Activated CD4-positive, alpha-beta T cell treated with anti-CD3 and anti-CD28 coated beads for 36 hours (primary cell): ENCODE measurements at regions of chr5 and their contacts with region 1.

Region 1: GRCh38 chr5:17216176-17216973 is 1.1 kb upstream of the BASP1 start:
- DNase-seq: peak; percentile 81
- ATAC-seq: peak; percentile 53
- H3K4me3 Mint-ChIP-seq: peak overlapping the region; percentile 42
- H3K27ac Mint-ChIP-seq: no peak overlapping the region
- H3K4me1 Mint-ChIP-seq: peaks cover 14% of the 10 kb centered on the region
- H3K27me3 Mint-ChIP-seq: peaks cover 35% of the 10 kb centered on the region

Region 2: GRCh38 chr5:17228821-17229291 is 12.5 kb after region 1 on chr5:
- CTCF ChIA-PET with region 1: no interaction called
- POLR2A ChIA-PET with region 1: no interaction called
- intact Hi-C with region 1: no loop called
- DNase-seq: no peak
- ATAC-seq: peak; percentile 33
- H3K4me3 Mint-ChIP-seq: no peak overlapping the region
- H3K27ac Mint-ChIP-seq: no peak overlapping the region
- H3K4me1 Mint-ChIP-seq: peaks cover 3% of the 10 kb centered on the region
- H3K27me3 Mint-ChIP-seq: peaks cover 9% of the 10 kb centered on the region

Region 3: GRCh38 chr5:17355586-17356346 is 139.4 kb after region 1 on chr5:
- CTCF ChIA-PET with region 1: no interaction called
- POLR2A ChIA-PET with region 1: no interaction called
- intact Hi-C with region 1: no loop called
- DNase-seq: no peak
- ATAC-seq: no peak
- H3K4me3 Mint-ChIP-seq: no peak overlapping the region
- H3K27ac Mint-ChIP-seq: no peak overlapping the region
- H3K4me1 Mint-ChIP-seq: no peaks in the 10 kb centered on the region
- H3K27me3 Mint-ChIP-seq: no peaks in the 10 kb centered on the region

Region 4: DNA sequence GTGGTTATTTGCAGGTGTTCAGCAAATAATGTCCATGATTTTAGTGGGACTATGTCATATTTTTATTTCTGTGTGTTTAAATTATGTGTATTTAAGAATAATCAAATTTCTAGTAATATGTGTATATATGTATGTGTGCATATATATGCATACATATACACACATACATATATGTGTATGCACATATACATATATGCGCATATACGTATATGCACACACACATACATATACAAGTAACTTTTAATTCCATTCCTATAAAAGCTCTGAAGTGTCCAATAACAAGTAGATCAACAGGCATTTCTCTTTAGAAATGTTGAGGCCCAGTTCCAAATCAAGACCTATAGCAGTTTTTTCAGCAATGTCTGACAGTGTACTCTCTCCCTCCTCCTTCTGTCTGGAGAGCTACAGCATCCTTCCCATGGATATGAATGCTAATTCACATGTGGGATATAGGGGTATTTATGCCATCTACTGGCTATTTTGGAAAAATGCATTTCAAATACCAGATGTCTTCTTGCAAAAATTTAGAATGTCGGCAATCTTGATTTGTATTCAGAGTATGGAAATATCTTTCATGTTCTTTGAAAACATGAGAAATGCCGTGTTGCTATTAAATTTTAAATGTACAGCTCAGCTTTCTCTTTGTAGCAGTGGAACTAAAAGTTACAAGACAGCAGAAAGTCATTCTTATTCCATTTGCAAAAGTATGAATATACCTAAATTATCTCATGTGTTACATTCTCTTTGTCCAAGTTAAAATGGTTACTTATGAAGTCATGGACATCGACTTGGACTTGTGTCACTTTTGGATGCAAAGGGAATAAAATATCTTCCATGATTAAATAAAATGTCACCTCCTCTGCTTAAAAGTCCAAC is 1065.5 kb after region 1 on chr5:
- CTCF ChIA-PET with region 1: interaction called, 4 read pairs
- POLR2A ChIA-PET with region 1: no interaction called
- intact Hi-C with region 1: loop called in 1 of 2 experiments (anchors 1 kb)
- DNase-seq: no peak
- ATAC-seq: no peak
- H3K4me3 Mint-ChIP-seq: no peak overlapping the region
- H3K27ac Mint-ChIP-seq: no peak overlapping the region
- H3K4me1 Mint-ChIP-seq: no peaks in the 10 kb centered on the region
- H3K27me3 Mint-ChIP-seq: no peaks in the 10 kb centered on the region

Region 5: DNA sequence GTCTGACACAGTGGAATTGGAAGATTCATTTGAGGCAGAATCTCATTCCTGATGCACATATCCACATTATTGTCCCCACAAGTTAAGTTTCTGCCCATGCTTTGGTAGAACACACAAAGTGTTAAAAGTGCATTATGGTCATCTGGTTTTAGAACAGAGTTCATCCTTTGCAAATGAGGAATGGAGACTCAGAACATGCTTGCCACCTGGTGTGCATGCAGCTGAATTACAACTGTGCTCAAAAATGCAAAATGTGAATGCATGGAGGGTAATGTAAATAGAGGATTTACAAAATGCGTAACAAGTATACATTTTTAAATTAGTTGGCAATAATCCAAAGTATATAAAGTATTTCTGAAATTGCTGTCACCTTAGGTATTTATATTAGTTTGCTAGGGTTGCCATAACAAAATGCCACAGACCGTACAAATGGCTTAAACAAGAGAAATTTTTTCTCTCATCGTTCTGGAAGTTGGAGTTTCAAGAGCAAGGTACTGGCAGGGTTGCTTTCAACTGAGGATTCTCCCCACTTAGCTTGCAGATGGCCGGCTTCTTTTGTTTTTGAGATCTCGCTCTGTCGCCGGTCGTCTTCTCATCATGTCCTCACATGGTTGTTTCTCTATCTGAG is 1089.0 kb after region 1 on chr5:
- CTCF ChIA-PET with region 1: interaction called, 7 read pairs
- POLR2A ChIA-PET with region 1: no interaction called
- intact Hi-C with region 1: loop called in 1 of 2 experiments (anchors 1 kb)
- DNase-seq: peak; percentile 6
- ATAC-seq: no peak
- H3K4me3 Mint-ChIP-seq: no peak overlapping the region
- H3K27ac Mint-ChIP-seq: no peak overlapping the region
- H3K4me1 Mint-ChIP-seq: no peaks in the 10 kb centered on the region
- H3K27me3 Mint-ChIP-seq: no peaks in the 10 kb centered on the region

Region 6: DNA sequence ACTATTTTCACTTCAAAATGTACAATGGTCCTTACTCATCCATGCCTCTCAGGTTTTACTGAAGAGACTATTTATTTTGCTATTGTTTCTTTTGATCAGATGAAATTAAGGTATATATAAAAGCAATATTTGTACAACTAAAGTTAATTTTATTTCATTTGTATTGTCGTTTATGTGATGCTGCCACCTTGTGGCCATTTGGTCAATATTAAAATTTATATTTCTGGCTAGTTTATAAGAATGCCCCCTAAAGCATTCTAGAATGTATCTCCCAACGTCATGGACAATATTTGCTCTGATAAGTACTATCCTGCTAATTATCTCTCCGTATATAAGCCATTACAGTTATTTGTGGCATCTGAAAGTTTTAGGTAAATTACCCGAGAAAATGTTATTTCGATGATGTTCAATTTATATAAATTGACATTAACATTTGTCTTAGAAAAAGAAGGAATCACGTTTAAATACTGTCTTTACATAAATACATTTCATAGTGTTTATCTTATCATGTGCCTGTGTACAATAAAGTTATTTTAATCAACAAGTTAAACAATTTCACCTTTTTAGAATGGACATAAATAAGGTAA is 1097.9 kb after region 1 on chr5:
- CTCF ChIA-PET with region 1: interaction called, 21 read pairs
- POLR2A ChIA-PET with region 1: no interaction called
- intact Hi-C with region 1: loop called (anchors 1 kb)
- DNase-seq: peak; percentile 20
- ATAC-seq: no peak
- H3K4me3 Mint-ChIP-seq: no peak overlapping the region
- H3K27ac Mint-ChIP-seq: no peak overlapping the region
- H3K4me1 Mint-ChIP-seq: no peaks in the 10 kb centered on the region
- H3K27me3 Mint-ChIP-seq: no peaks in the 10 kb centered on the region